Panc1 (cell line): ENCODE measurements at regions of chr2 and their contacts with region 1.

Region 1: GRCh38 chr2:172580544-172580943 is 24.7 kb downstream of the PDK1 start:
- DNase-seq: no peak
- ATAC-seq: no peak
- H3K4me3 ChIP-seq: no peak overlapping the region
- H3K27ac ChIP-seq: no peak overlapping the region
- H3K4me1 ChIP-seq: no peaks in the 10 kb centered on the region
- H3K27me3 ChIP-seq: no peaks in the 10 kb centered on the region
- CTCF ChIP-seq: no peak

Region 2: GRCh38 chr2:171469176-171469575 is 1111.4 kb before region 1 on chr2:
- CTCF ChIA-PET with region 1: no interaction called
- POLR2A ChIA-PET with region 1: no interaction called
- in situ Hi-C with region 1: no loop called
- intact Hi-C with region 1: no loop called
- DNase-seq: no peak
- ATAC-seq: no peak
- H3K4me3 ChIP-seq: no peak overlapping the region
- H3K27ac ChIP-seq: no peak overlapping the region
- H3K4me1 ChIP-seq: no peaks in the 10 kb centered on the region
- H3K27me3 ChIP-seq: no peaks in the 10 kb centered on the region
- CTCF ChIP-seq: no peak

Region 3: GRCh38 chr2:172551266-172551665 is 29.3 kb before region 1 on chr2:
- CTCF ChIA-PET with region 1: no interaction called
- POLR2A ChIA-PET with region 1: no interaction called
- in situ Hi-C with region 1: no loop called
- intact Hi-C with region 1: no loop called
- DNase-seq: no peak
- ATAC-seq: no peak
- H3K4me3 ChIP-seq: no peak overlapping the region
- H3K27ac ChIP-seq: peak overlapping the region; percentile 34; the same call in 1 of the 2 replicates
- H3K4me1 ChIP-seq: peaks cover 10% of the 10 kb centered on the region
- H3K27me3 ChIP-seq: no peaks in the 10 kb centered on the region
- CTCF ChIP-seq: no peak

Region 4: DNA sequence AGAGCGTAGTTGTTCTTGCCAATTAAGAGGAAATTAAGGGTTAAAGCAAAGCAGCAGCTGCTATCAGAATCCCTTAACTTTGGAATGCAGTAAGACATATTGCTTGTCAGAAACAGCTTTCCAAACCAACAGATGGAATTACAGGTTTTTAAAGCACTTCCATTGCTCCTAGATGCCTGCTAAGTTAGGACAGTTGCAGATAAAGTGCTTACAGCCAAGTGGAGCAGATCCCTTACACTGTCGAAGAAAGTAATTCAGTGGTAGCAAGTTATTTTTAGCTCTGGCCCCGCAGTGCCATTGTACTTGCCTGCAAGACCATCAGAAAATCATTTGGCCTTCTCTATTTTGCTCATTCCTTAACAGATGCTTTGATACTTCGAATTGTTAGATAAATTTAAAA is 19.3 kb before region 1 on chr2:
- CTCF ChIA-PET with region 1: no interaction called
- POLR2A ChIA-PET with region 1: interaction called, 10 read pairs
- in situ Hi-C with region 1: no loop called
- intact Hi-C with region 1: no loop called
- DNase-seq: no peak
- ATAC-seq: no peak
- H3K4me3 ChIP-seq: no peak overlapping the region
- H3K27ac ChIP-seq: no peak overlapping the region
- H3K4me1 ChIP-seq: peaks cover 13% of the 10 kb centered on the region
- H3K27me3 ChIP-seq: no peaks in the 10 kb centered on the region
- CTCF ChIP-seq: no peak

Region 5: DNA sequence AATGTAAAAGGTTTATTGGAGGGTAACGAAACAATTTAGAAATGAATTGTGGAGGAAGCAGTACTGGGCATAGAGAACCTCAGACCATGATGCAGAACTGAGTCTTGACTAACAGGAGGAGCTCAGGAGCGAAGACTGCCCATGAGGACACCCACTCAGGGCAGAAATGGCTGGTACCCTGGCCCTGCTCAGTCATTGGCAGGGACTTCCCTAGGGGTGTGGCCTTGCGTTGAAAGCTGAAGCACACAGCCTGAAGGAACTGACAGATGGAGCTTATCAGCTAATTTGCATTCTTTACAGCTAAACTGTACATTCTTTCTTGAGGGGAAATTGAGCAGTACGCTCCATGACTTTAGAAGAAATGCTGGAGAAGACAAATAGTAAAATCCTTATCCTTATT is 32.5 kb after region 1 on chr2:
- CTCF ChIA-PET with region 1: no interaction called
- POLR2A ChIA-PET with region 1: no interaction called
- in situ Hi-C with region 1: no loop called
- intact Hi-C with region 1: no loop called
- DNase-seq: no peak
- ATAC-seq: no peak
- H3K4me3 ChIP-seq: no peak overlapping the region
- H3K27ac ChIP-seq: no peak overlapping the region
- H3K4me1 ChIP-seq: no peaks in the 10 kb centered on the region
- H3K27me3 ChIP-seq: no peaks in the 10 kb centered on the region
- CTCF ChIP-seq: no peak